CD4-positive, alpha-beta T cell (primary cell): ENCODE measurements at regions of chr17 and their contacts with region 1.

Region 1: DNA sequence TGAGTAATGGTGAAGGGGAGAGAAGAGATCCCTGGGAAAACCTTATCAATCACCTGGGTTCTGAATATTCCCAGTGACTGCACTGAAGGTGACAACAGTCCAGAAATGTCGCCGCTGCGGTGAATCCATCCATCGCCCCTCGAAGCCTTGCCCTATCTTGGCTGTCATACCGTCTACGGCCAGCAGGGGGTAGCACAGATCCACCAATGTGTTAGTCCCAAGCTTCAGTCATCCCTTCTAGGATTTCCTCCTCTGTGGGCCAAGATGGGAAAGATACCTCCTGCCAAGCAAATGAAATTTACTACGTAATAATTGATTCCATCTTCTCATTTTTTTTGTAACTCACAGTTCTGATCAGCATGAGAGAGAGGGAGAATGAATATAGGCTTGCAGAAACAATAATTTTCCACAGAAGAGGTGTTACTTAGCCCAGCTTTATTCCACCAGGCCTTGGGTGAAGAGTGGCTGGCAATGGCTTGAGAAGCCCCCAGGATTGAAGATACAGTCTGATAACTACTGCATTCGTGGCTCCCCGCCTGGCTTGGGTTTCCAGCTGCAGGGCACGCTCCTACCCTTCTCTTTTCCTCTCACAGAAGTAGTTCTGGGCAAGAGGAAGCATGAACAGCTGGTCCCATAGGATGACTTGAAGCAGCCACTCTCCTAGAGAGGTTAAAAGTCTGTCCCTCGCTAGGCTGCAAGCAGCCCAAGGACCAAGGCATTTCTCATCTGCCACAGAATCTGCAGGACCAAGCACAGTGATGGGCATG is 2.6 kb upstream of the FMNL1 start:
- DNase-seq: peak; percentile 74 to 94 (median 86)
- ATAC-seq: peak; percentile 43
- H3K4me3 ChIP-seq: peak overlapping the region; percentile 4
- H3K4me3 Mint-ChIP-seq: peak overlapping the region; percentile 91
- H3K27ac ChIP-seq: peak overlapping the region in 1 of 2 donors; percentile 17
- H3K27ac Mint-ChIP-seq: peak overlapping the region; percentile 76
- H3K4me1 ChIP-seq: peaks cover 38% of the 10 kb centered on the region
- H3K4me1 Mint-ChIP-seq: peaks cover 36% of the 10 kb centered on the region
- H3K27me3 ChIP-seq: no peaks in the 10 kb centered on the region
- H3K27me3 Mint-ChIP-seq: no peaks in the 10 kb centered on the region
- CTCF ChIP-seq: peak; percentile 99

Region 2: GRCh38 chr17:45087504-45087975 is 131.5 kb before region 1 on chr17:
- CTCF ChIA-PET with region 1: no interaction called
- POLR2A ChIA-PET with region 1: no interaction called
- intact Hi-C with region 1: no loop called
- DNase-seq: no peak
- ATAC-seq: no peak
- H3K4me3 ChIP-seq: no peak overlapping the region
- H3K4me3 Mint-ChIP-seq: no peak overlapping the region
- H3K27ac ChIP-seq: no peak overlapping the region
- H3K27ac Mint-ChIP-seq: no peak overlapping the region
- H3K4me1 ChIP-seq: no peaks in the 10 kb centered on the region
- H3K4me1 Mint-ChIP-seq: no peaks in the 10 kb centered on the region
- H3K27me3 ChIP-seq: no peaks in the 10 kb centered on the region
- H3K27me3 Mint-ChIP-seq: no peaks in the 10 kb centered on the region
- CTCF ChIP-seq: no peak

Region 3: DNA sequence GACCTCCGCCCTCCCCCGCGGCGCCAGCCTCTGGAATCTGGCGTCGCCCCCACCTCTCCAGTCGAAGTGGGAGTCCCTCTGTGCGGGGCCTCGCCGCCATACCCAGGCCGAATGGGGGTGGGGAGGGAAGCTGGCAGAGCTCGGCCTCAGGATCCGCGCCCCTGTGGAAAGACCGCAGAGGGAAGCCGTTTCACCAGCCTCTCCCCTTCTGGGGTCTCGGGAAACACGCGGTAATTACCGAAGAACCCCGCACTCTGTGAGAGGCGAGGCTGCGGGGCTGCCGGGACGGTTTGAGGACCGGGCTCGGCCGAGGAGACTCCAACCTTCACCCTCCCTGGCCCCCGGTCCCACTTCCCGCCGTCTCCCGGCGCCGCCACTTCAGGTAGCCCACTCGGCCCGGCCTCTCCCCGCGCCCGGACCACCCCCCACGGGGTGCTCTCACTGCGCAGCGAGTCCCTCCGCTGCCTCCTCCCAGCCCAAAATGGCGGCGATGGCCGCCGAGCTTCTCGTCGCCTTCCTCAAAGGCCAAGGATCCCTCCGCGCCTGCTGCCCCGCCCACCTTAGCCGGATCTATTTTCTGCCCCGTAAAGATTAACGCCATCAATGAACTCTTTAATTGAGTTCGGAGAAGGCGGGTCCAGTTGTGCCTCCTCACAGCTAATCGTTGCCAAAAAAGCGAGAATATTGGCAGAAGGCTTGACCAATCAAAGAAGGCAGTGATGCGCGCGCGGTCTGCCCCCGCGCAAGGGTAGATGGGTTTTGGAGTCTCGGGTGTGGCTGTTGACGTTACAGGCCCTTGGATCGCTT is 57.9 kb before region 1 on chr17:
- CTCF ChIA-PET with region 1: interaction called, 7 read pairs
- POLR2A ChIA-PET with region 1: interaction called, 57 read pairs
- intact Hi-C with region 1: no loop called
- DNase-seq: peak; percentile 94 to 100 (median 98)
- ATAC-seq: peak; percentile 93
- H3K4me3 ChIP-seq: peak overlapping the region; percentile 97
- H3K4me3 Mint-ChIP-seq: peak overlapping the region; percentile 93
- H3K27ac ChIP-seq: peak overlapping the region; percentile 98 to 99
- H3K27ac Mint-ChIP-seq: peak overlapping the region; percentile 94
- H3K4me1 ChIP-seq: peaks cover 26% of the 10 kb centered on the region
- H3K4me1 Mint-ChIP-seq: peaks cover 37% of the 10 kb centered on the region
- H3K27me3 ChIP-seq: no peaks in the 10 kb centered on the region
- H3K27me3 Mint-ChIP-seq: no peaks in the 10 kb centered on the region
- CTCF ChIP-seq: no peak

Region 4: GRCh38 chr17:45256114-45256966 is 37.3 kb after region 1 on chr17:
- CTCF ChIA-PET with region 1: interaction called, 10 read pairs
- POLR2A ChIA-PET with region 1: interaction called, 23 read pairs
- intact Hi-C with region 1: no loop called
- DNase-seq: peak in 1 of 14 experiments; percentile 36
- ATAC-seq: peak; percentile 69
- H3K4me3 ChIP-seq: no peak overlapping the region
- H3K4me3 Mint-ChIP-seq: peak overlapping the region; percentile 61
- H3K27ac ChIP-seq: peak overlapping the region in 1 of 2 donors; percentile 46
- H3K27ac Mint-ChIP-seq: peak overlapping the region; percentile 79
- H3K4me1 ChIP-seq: peaks cover 51% of the 10 kb centered on the region
- H3K4me1 Mint-ChIP-seq: peaks cover 72% of the 10 kb centered on the region
- H3K27me3 ChIP-seq: no peaks in the 10 kb centered on the region
- H3K27me3 Mint-ChIP-seq: no peaks in the 10 kb centered on the region
- CTCF ChIP-seq: peak; percentile 14

Region 5: DNA sequence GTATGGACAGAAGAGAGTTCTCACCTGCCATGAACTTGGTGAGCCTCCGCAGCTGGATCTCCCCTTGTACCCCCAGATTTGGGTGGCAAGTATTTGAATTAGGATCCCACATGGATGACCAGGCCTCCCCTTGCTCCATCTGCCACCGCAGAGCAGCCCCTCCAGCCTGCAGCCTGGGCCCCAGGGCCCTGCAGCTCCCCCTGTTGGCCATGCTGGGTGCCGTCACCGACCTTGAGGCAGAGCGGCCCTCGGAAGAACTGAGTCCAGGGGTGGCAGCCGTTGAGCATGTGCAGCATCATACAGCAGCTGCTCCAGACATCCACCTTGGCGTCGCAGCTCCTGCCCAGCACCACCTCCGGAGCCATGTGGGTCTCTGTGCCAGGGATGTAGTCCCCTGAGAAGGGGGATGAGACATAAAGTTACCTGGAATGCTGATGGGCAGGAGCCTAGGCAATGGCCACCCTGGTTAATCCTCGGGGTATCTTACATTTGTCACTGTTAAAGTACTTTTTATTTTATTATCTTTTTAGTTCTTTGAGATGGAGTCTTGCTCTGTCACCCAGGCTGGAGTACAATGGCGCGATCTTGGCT is 51.8 kb after region 1 on chr17:
- CTCF ChIA-PET with region 1: interaction called, 32 read pairs
- POLR2A ChIA-PET with region 1: interaction called, 3 read pairs
- intact Hi-C with region 1: loop called (anchors 1 to 2 kb)
- DNase-seq: peak; percentile 27 to 74 (median 51)
- ATAC-seq: peak; percentile 85
- H3K4me3 ChIP-seq: no peak overlapping the region
- H3K4me3 Mint-ChIP-seq: no peak overlapping the region
- H3K27ac ChIP-seq: no peak overlapping the region
- H3K27ac Mint-ChIP-seq: no peak overlapping the region
- H3K4me1 ChIP-seq: peaks cover 6% of the 10 kb centered on the region
- H3K4me1 Mint-ChIP-seq: no peaks in the 10 kb centered on the region
- H3K27me3 ChIP-seq: no peaks in the 10 kb centered on the region
- H3K27me3 Mint-ChIP-seq: no peaks in the 10 kb centered on the region
- CTCF ChIP-seq: peak; percentile 71

Region 6: GRCh38 chr17:45317112-45317928 is 98.2 kb after region 1 on chr17:
- CTCF ChIA-PET with region 1: interaction called, 15 read pairs
- POLR2A ChIA-PET with region 1: interaction called, 7 read pairs
- intact Hi-C with region 1: loop called in 1 of 2 experiments (anchors 2 kb)
- DNase-seq: peak; percentile 93 to 100 (median 100)
- ATAC-seq: peak; percentile 83
- H3K4me3 ChIP-seq: peak overlapping the region; percentile 88
- H3K4me3 Mint-ChIP-seq: peak overlapping the region; percentile 98
- H3K27ac ChIP-seq: peak overlapping the region; percentile 51 to 79
- H3K27ac Mint-ChIP-seq: peak overlapping the region; percentile 85
- H3K4me1 ChIP-seq: peaks cover 81% of the 10 kb centered on the region
- H3K4me1 Mint-ChIP-seq: peaks cover 88% of the 10 kb centered on the region
- H3K27me3 ChIP-seq: no peaks in the 10 kb centered on the region
- H3K27me3 Mint-ChIP-seq: no peaks in the 10 kb centered on the region
- CTCF ChIP-seq: no peak

Region 7: GRCh38 chr17:45584092-45585036 is 365.3 kb after region 1 on chr17:
- CTCF ChIA-PET with region 1: no interaction called
- POLR2A ChIA-PET with region 1: no interaction called
- intact Hi-C with region 1: loop called in 1 of 2 experiments (anchors 5 kb)
- DNase-seq: peak; percentile 56 to 89 (median 76)
- ATAC-seq: peak; percentile 54
- H3K4me3 ChIP-seq: peak overlapping the region; percentile 78
- H3K4me3 Mint-ChIP-seq: peak overlapping the region; percentile 99
- H3K27ac ChIP-seq: peak overlapping the region; percentile 83
- H3K27ac Mint-ChIP-seq: peak overlapping the region; percentile 98
- H3K4me1 ChIP-seq: peaks cover 42% of the 10 kb centered on the region
- H3K4me1 Mint-ChIP-seq: peaks cover 38% of the 10 kb centered on the region
- H3K27me3 ChIP-seq: no peaks in the 10 kb centered on the region
- H3K27me3 Mint-ChIP-seq: no peaks in the 10 kb centered on the region
- CTCF ChIP-seq: no peak

Region 8: DNA sequence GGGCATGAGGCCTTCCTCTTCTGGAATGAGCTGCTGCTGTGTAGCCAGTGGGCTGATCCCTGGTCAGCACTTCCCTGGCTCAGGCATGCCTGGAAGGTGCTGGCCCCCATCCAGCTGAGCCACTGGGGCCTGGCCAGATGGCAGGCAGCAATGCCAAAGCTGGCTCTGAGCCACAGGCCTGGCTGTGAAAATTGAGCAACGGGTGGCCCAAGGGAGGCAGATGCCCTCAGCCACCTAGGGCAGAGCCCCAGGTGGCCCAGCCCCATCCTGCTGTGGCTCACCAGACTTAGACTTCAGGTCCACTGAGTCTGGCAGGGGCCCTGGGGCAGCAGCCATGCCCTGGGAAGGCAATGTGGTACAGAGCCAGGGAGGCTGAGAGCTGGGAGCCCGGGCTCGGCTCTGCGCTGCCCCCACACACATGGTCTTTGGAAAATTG is 556.5 kb after region 1 on chr17:
- CTCF ChIA-PET with region 1: no interaction called
- POLR2A ChIA-PET with region 1: no interaction called
- intact Hi-C with region 1: no loop called
- DNase-seq: no peak
- ATAC-seq: no peak
- H3K4me3 ChIP-seq: no peak overlapping the region
- H3K4me3 Mint-ChIP-seq: no peak overlapping the region
- H3K27ac ChIP-seq: no peak overlapping the region
- H3K27ac Mint-ChIP-seq: no peak overlapping the region
- H3K4me1 ChIP-seq: no peaks in the 10 kb centered on the region
- H3K4me1 Mint-ChIP-seq: no peaks in the 10 kb centered on the region
- H3K27me3 ChIP-seq: peaks cover 12 to 30% of the 10 kb centered on the region in 2 experiments
- H3K27me3 Mint-ChIP-seq: peaks cover 77% of the 10 kb centered on the region
- CTCF ChIP-seq: no peak